GM18951 (cell line): ENCODE measurements at regions of chr6 and their contacts with region 1.

Region 1: DNA sequence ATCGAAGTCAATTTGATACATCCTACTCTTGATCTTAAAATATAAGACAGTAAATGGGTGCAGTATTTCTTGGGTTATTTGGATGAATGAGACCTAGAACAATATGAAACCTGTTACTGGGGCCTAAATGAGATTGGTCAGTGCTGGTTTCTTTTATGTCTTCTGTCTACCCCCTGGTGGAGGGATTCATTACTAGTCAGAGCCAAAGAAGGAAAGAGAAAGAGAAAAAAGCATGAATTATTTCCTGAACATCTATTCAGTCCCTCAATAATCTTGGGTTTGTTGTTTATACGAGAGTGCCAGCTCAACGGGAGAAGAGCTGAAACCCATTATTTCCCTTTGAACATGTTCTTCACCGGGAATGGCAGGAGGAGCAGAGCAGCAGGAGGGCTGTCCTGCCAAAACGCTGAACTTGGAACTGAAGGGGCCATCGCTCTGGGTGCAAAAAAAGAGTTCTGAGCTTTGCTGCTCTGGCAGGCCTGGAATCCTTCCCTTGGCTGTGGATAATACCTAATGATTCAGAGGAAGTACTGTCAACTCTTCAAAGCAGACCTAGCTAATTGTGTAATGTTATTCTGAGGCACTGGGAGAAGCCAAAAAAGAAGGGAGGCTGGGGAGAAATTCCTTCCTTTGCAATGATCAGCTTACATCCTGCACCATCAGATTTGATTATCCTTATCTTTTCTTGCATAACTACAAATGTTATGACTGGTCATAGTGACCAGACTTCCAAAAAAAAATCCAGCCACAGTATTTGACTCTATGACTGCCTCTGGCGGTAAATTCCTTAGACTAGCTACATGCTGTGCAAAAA is 72.0 kb downstream of the BLOC1S5 start:
- POLR2A ChIP-seq: no peak

Region 2: DNA sequence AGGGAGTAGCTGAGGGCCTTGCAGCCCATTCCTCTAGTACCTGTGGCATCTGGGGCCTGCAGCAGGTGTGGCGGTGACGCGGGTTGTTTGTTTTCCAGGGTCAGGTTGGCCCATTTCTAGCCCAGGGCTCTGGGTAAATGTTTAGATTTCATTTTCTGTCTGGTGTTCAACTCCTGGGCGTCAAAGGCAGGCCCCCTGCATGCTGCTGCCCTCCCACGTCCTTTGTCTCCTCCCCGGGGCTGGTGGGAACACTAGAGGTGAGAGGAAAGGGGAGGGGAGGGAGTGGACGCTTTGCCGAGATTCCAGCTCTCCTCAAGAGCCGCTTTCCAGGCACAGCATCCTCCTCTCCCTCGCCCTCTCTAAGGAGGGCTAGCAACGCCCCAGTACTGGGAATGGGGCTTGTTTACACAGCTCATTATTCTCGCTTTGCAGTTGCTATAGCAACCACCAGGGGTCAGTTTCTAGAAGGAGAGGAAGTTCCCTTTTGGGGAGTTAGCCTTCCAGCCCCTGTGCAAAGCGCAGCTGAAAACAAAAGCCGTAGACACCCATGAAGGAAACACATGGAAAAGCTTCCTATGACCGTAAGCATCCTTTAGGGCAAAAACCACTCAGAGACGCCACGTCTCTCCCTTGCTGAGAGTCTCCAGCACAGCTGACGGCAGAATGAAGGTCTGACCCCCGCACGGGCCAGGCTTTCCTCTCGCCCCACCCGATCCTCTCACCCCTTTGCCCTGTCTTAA is 1233.1 kb before region 1 on chr6:
- in situ Hi-C with region 1: no loop called
- POLR2A ChIP-seq: no peak

Region 3: DNA sequence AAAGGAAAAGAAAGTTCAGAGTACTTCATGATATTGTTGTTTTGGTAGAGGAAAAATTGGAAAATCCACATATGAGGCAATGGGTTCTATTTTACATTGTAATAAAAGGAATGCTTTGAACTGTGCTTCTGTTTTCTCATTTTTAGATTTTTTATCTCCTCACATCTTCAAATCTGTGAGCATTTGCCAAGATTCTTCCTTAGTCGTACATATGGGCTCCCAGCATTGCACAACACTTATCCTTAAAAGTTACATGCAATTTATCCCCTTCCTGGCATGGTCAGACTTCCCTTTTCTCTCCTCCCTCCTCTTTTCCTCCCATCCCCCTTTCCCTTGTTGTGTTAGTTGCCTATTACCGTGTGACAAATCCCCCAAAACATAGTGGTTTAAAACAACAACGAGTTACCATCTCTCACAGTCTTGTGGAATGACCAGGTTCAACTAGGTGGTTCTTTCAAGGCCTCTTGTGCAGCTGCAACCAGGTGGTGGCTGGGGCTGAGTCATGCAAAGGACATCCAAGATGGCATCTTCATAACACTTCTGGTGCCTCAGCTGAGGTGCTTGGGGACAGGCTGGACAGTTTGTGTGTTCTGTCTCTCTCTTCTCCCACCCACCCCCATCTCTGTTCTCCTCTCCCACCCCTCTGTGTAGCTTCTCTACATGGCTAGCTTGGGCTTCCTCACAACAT is 150.3 kb before region 1 on chr6:
- in situ Hi-C with region 1: no loop called
- POLR2A ChIP-seq: no peak

Region 4: GRCh38 chr6:7899101-7899888 is 92.9 kb before region 1 on chr6:
- in situ Hi-C with region 1: loop called (anchors 10 kb)
- POLR2A ChIP-seq: no peak

Region 5: DNA sequence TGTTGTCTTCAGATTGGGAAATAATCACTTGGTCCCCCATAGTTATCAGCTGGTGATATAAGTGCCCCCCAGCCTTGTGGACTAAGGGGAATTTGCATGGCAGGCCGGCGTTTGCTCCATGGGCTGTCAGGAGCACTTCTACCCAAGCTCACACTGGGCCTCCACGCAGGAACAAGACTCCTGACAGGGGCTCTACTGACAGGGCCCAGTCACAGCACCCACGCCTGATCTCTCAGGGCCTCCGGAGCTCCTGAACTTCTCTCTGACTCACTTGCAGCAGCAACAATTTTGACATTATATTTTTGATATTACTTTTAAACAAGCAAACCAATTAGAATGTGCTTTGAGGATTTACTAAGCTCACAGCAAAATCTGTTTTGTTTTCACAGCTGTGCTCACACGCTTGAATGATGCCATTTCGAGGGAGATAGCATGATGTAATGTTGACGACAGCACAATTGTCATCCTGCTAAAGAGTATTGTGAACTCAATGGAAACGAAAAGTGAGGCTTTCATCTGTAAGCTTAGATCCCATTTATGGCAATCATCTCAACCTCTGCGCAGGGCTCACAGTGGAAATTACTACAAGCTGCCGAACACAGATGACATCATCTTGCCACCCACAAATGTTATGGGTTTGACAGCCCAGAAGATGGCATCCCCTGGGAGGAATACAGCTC is 52.9 kb before region 1 on chr6:
- in situ Hi-C with region 1: no loop called
- POLR2A ChIP-seq: no peak